MCF 10A (cell line): ENCODE measurements at regions of chr21 and their contacts with region 1.

Region 1: GRCh38 chr21:38289705-38290485 is 33.1 kb downstream of the KCNJ15 start:
- DNase-seq: peak; percentile 98
- H3K4me3 Mint-ChIP-seq: peak overlapping the region; percentile 41
- H3K27ac Mint-ChIP-seq: peak overlapping the region; percentile 77
- H3K4me1 Mint-ChIP-seq: peaks cover 38% of the 10 kb centered on the region
- H3K27me3 Mint-ChIP-seq: no peaks in the 10 kb centered on the region
- CTCF ChIP-seq: no peak

Region 2: GRCh38 chr21:38306433-38307141 is 16.7 kb after region 1 on chr21:
- CTCF ChIA-PET with region 1: interaction called, 10 read pairs
- POLR2A ChIA-PET with region 1: interaction called, 11 read pairs
- intact Hi-C with region 1: no loop called
- DNase-seq: peak; percentile 97
- H3K4me3 Mint-ChIP-seq: peak overlapping the region; percentile 16
- H3K27ac Mint-ChIP-seq: peak overlapping the region; percentile 11
- H3K4me1 Mint-ChIP-seq: peaks cover 29% of the 10 kb centered on the region
- H3K27me3 Mint-ChIP-seq: no peaks in the 10 kb centered on the region
- CTCF ChIP-seq: no peak